Stomach (tissue), 19 donors: ENCODE measurements at regions of chr4 and their contacts with region 1.

Region 1: DNA sequence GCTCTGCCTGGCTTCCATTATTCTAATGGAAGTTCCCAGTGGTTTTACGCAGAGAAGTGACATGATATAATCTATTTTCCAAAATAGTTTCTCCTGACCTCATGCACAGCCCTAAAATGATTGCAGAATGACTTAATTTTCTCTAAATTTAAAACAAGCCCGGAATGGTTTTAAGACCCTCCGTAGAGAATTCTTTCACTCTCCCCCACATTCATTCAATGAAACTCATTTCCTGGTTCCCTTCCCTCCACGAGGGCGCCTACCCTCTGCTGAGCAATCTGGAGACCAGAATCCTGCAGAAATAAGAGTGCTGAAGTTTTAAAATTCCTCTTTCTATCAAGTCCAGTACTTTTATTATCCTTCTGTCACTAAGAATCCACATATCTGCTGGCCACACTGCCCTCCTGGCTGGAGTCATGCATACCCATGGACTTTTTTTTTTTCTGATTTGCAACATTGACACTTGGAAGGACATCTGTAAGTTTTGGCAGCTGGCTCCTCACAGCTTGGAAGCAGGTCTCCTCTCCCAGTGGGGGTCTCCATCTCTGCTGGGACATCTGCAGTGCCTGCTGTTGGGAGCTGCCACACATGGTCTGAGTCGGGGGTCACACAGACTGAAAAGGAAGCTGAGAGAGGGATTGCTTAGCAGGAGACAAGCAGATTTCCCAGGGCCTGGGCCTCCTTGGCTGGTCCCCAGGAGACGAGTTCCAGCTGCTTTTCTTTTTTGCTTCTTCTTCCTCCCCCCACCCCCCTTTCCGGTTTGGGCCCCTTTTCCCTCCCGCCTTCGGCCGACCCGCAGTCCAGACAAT is 86.1 kb downstream of the SOWAHB start:
- DNase-seq: peak in 1 of 2 donors; percentile 91
- H3K4me3 ChIP-seq: no peak overlapping the region
- H3K27ac ChIP-seq: no peak overlapping the region
- H3K4me1 ChIP-seq: peaks cover 0 to 5% (median 0%) of the 10 kb centered on the region in 4 donors
- H3K27me3 ChIP-seq: no peaks in the 10 kb centered on the region
- CTCF ChIP-seq: no peak
- EP300 ChIP-seq: no peak
- POLR2A ChIP-seq: no peak

Region 2: DNA sequence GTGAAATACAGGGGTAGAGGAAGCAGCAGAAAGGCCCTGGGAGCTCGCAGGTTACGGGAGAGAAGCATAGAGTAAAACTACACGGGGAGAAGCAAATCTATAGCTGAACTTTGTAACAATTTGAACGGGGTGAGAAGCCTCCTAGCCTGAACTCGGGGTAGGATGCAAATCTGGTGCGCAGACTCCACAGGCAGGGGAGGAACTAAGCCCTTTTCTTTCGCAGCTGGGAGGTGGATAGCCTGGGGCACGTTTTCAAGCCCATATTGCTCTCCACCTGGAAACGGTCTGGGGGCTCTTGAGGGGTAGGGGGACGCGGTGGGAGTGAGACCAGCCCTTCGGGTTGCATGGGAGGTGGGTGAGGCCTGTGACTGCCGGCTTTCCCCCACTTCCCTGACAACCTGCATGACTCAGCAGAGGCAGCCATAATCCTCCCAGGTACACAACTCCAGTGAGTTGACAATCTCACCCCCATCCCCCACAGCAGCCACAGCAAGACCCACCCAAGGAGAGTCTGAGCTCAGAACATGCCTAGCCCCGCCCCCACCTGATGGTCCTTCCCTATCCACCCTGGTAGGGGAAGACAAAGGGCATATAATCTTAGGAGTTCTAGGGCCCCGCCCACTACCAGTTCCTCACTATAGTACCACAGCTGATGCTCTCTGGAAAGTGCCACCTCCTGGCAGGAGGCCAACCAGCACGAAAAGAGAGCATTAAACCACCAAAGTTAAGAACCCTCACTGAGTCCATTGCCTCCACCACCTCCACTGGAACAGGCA is 56.3 kb after region 1 on chr4:
- intact Hi-C with region 1: loop called (anchors 10 kb)
- DNase-seq: peak; percentile 51 to 82
- H3K4me3 ChIP-seq: no peak overlapping the region
- H3K27ac ChIP-seq: no peak overlapping the region
- H3K4me1 ChIP-seq: no peaks in the 10 kb centered on the region
- H3K27me3 ChIP-seq: no peaks in the 10 kb centered on the region
- CTCF ChIP-seq: no peak
- EP300 ChIP-seq: no peak
- POLR2A ChIP-seq: no peak